ENCODE measurements at regions of chr18 and their contacts with region 1.

Region 1: GRCh38 chr18:33761363-33761762 is 183.3 kb downstream of the ASXL3 start:
- DNase-seq: no peak
- H3K4me3 ChIP-seq: no peak overlapping the region
- H3K27ac ChIP-seq: no peak overlapping the region
- H3K4me1 ChIP-seq: peaks cover 1% of the 10 kb centered on the region
- H3K27me3 ChIP-seq: no peaks in the 10 kb centered on the region
- CTCF ChIP-seq: no peak
- POLR2A ChIP-seq: no peak

Region 2: GRCh38 chr18:32714571-32715148 is 1046.7 kb before region 1 on chr18:
- intact Hi-C with region 1: loop called (anchors 5 kb)
- DNase-seq: no peak
- H3K4me3 ChIP-seq: no peak overlapping the region
- H3K27ac ChIP-seq: no peak overlapping the region
- H3K4me1 ChIP-seq: no peaks in the 10 kb centered on the region
- H3K27me3 ChIP-seq: no peaks in the 10 kb centered on the region
- CTCF ChIP-seq: peak; percentile 36 to 45 (median 45)
- POLR2A ChIP-seq: no peak

Region 3: DNA sequence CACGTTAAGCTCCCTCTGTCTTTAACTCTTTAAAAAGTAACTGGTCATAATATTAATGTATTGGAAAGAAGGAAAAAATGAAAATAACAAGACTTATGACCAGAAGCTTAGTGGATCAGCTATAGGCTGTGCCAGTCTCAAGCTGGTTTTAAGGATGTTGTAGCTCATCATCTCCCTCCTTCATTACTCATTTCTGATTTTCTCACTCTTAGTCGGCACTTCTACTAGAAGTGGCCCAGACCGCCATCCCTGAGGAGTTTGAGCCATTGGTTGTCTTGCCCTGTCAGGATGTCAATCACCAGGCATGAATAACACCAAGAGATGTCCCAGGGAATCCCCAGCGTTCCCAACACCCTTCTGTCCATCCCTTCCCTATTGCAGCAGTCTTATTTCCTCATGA is 31.8 kb before region 1 on chr18:
- intact Hi-C with region 1: no loop called
- DNase-seq: no peak
- H3K4me3 ChIP-seq: no peak overlapping the region
- H3K27ac ChIP-seq: no peak overlapping the region
- H3K4me1 ChIP-seq: no peaks in the 10 kb centered on the region
- H3K27me3 ChIP-seq: no peaks in the 10 kb centered on the region
- CTCF ChIP-seq: no peak
- POLR2A ChIP-seq: no peak